Activated B cell treated with CpG ODN at 0.5 μM for 24 hours (primary cell): ENCODE measurements at regions of chr6 and their contacts with region 1.

Region 1: GRCh38 chr6:593139-593906 is 63.6 kb downstream of the HUS1B start:
- DNase-seq: no peak
- ATAC-seq: peak; percentile 56
- H3K4me3 Mint-ChIP-seq: no peak overlapping the region
- H3K27ac Mint-ChIP-seq: no peak overlapping the region
- H3K4me1 Mint-ChIP-seq: no peaks in the 10 kb centered on the region
- H3K27me3 Mint-ChIP-seq: no peaks in the 10 kb centered on the region
- CTCF ChIP-seq: no peak

Region 2: GRCh38 chr6:562052-562676 is 31.2 kb before region 1 on chr6:
- CTCF ChIA-PET with region 1: no interaction called
- POLR2A ChIA-PET with region 1: no interaction called
- intact Hi-C with region 1: no loop called
- DNase-seq: no peak
- ATAC-seq: no peak
- H3K4me3 Mint-ChIP-seq: no peak overlapping the region
- H3K27ac Mint-ChIP-seq: no peak overlapping the region
- H3K4me1 Mint-ChIP-seq: no peaks in the 10 kb centered on the region
- H3K27me3 Mint-ChIP-seq: no peaks in the 10 kb centered on the region
- CTCF ChIP-seq: no peak

Region 3: GRCh38 chr6:722077-722524 is 128.8 kb after region 1 on chr6:
- CTCF ChIA-PET with region 1: interaction called, 19 read pairs
- POLR2A ChIA-PET with region 1: no interaction called
- intact Hi-C with region 1: loop called (anchors 1 kb)
- DNase-seq: peak; percentile 40
- ATAC-seq: peak; percentile 50
- H3K4me3 Mint-ChIP-seq: no peak overlapping the region
- H3K27ac Mint-ChIP-seq: no peak overlapping the region
- H3K4me1 Mint-ChIP-seq: peaks cover 4% of the 10 kb centered on the region
- H3K27me3 Mint-ChIP-seq: peaks cover 12% of the 10 kb centered on the region
- CTCF ChIP-seq: peak; percentile 86

Region 4: DNA sequence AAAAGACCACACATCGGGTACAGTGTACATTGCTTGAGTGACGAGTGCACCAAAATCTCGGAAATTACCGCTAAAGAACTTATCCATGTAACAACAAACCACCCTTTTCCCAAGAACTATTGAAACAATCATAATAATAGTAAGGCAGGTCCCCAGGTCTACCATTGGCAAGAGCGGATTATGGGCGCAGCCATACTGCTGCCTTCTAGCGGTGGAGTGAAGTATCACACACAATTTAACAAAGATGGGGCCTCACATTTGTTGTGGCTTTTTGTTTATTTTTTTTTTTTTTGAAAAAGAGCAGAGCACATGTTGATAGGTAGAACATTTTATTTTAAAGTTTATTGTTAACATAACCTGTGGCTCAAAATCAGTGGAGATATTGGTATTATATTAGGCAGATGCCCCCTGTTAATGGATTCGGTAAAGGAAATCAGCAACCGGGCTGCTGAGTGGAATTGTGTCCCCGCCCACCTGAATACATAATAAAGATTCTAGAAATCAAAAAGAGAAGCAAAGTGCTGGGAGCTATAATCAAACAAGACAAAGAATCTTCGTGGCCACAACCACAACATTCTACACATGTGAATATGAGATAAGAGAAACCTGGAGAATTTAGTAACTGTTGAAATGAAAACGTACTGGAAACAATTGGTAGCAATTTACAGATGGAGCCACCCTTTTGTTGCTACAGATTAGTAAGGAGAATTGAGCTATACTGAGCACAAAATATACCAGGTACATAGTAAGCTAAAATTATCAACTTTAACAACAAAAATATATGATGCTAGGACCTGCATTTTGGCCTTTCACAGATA is 193.8 kb after region 1 on chr6:
- CTCF ChIA-PET with region 1: interaction called, 11 read pairs
- POLR2A ChIA-PET with region 1: no interaction called
- intact Hi-C with region 1: loop called (anchors 1 kb)
- DNase-seq: no peak
- ATAC-seq: no peak
- H3K4me3 Mint-ChIP-seq: no peak overlapping the region
- H3K27ac Mint-ChIP-seq: no peak overlapping the region
- H3K4me1 Mint-ChIP-seq: peaks cover 6% of the 10 kb centered on the region
- H3K27me3 Mint-ChIP-seq: peaks cover 20% of the 10 kb centered on the region
- CTCF ChIP-seq: no peak

Region 5: DNA sequence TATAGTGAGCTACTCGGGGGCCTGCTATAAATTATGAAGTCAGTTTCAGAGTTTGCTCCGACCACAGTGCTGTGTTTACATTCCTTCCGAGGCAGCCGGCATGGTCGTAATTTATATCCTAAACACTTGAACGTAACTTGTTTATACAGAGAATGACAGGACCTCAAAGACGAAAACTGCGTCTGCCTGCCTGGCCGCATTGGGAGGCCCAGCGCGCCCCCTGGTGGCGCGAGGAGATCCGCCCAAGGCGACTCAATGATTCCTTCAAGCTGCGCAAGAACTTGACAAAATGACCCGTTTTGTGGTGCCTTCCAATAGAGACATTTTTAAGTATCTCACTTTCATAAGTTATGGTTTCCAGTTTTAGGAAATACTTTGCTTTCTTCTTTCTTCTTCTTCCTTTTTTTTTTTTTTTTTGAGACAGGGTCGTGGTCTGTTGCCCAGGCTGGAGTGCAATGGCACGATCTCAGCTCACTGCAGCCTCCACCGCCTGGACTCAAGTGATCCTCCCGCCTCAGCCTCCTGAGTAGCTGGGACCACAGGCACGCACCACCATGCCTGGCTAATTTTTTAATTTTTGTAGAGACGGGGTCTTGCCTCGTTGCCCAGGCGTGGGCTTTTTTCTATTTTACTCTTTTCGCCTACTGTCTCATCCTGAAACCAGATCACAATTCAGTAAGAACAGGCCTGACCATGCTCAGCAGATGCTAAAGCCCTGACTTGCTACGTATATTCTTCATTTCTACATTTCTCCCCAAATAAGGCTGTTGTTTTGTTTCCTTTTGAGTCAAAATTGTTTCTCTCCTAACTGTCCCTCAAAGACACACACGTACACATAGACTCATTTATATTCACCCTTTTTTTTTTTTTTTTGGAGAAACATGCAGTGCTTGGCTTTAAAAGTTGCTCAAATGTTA is 803.9 kb after region 1 on chr6:
- CTCF ChIA-PET with region 1: interaction called, 55 read pairs
- POLR2A ChIA-PET with region 1: no interaction called
- intact Hi-C with region 1: loop called (anchors 1 kb)
- DNase-seq: peak; percentile 67
- ATAC-seq: peak; percentile 58
- H3K4me3 Mint-ChIP-seq: no peak overlapping the region
- H3K27ac Mint-ChIP-seq: no peak overlapping the region
- H3K4me1 Mint-ChIP-seq: peaks cover 8% of the 10 kb centered on the region
- H3K27me3 Mint-ChIP-seq: peaks cover 48% of the 10 kb centered on the region
- CTCF ChIP-seq: peak; percentile 90

Region 6: GRCh38 chr6:1436334-1437306 is 843.3 kb after region 1 on chr6:
- CTCF ChIA-PET with region 1: interaction called, 21 read pairs
- POLR2A ChIA-PET with region 1: no interaction called
- intact Hi-C with region 1: loop called (anchors 1 kb)
- DNase-seq: no peak
- ATAC-seq: peak; percentile 71
- H3K4me3 Mint-ChIP-seq: no peak overlapping the region
- H3K27ac Mint-ChIP-seq: no peak overlapping the region
- H3K4me1 Mint-ChIP-seq: no peaks in the 10 kb centered on the region
- H3K27me3 Mint-ChIP-seq: peaks cover 43% of the 10 kb centered on the region
- CTCF ChIP-seq: no peak